ENCODE measurements at regions of chr20 and their contacts with region 1.

Region 1: DNA sequence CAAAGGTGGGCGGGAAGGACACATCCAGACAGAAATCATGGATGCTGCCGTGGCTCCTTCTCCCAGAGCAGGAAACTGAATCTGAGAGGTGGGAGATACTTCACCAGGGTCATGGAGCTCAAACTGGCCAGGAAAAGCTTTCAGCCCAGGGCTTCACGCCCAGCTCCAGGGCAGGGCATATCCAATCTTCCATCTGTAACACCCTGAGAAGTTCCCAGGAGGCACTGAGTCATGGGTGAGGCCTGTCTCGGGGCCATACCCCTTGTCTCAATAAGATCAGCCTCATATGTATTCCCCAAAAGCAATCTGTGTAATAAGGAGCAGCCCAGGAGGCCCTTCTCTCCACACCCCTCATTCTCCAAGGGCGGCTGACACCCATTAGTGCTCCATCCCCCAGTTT is 439.2 kb upstream of the SULF2 start:
- DNase-seq: peak; percentile 11
- H3K4me3 ChIP-seq: no peak overlapping the region
- H3K27ac ChIP-seq: no peak overlapping the region
- H3K4me1 ChIP-seq: no peaks in the 10 kb centered on the region
- H3K27me3 ChIP-seq: 0 out of 2 replicates have a peak, but pooled peaks cover 4% of the 10 kb centered on the region

Region 2: GRCh38 chr20:48283305-48284080 is 59.0 kb after region 1 on chr20:
- in situ Hi-C with region 1: loop called (anchors 10 kb)
- DNase-seq: peak; percentile 93
- H3K4me3 ChIP-seq: no peak overlapping the region
- H3K27ac ChIP-seq: no peak overlapping the region
- H3K4me1 ChIP-seq: peaks cover 23% of the 10 kb centered on the region
- H3K27me3 ChIP-seq: peaks cover 19% of the 10 kb centered on the region

Region 3: DNA sequence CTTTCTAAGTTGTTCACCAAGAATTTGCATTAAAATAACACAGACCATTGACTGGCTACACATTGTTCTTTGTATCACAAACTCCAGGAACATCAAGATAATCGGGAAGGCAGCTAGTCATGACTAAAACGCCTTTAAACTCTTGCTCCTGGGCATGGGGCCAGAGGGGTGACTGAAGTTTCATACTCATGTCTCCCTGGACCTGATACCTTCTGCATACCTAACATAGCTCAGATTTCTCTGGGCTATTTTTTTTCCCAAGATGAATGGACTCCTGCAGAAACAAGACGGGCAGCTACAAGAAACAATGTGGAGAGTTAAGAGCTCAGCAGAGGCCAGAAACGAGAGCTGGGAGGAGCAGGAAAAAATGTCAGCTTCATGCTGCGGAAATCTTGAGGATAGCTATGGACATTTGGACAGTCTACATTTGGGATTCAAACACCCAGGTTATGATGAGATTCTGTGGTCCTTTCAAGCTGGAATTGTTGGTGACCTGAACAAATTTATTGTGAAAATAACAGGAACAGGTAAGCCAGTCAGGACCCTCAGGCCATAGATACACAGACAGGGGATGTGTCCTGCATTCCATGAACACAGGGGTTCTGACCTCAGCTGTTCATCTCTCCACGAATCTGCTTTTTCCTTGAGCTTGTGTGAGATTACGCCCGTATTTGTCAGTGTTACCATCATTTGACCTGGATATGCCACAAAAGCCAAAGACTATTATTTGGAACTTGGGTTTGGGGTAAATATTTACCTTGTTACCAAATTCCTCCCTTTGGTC is 314.1 kb after region 1 on chr20:
- in situ Hi-C with region 1: no loop called
- DNase-seq: peak; percentile 57
- H3K4me3 ChIP-seq: no peak overlapping the region
- H3K27ac ChIP-seq: no peak overlapping the region
- H3K4me1 ChIP-seq: no peaks in the 10 kb centered on the region
- H3K27me3 ChIP-seq: peaks cover 5% of the 10 kb centered on the region